Activated CD8-positive, alpha-beta T cell treated with anti-CD3 and anti-CD28 coated beads for 36 hours (primary cell): ENCODE measurements at regions of chrX and their contacts with region 1.

Region 1: DNA sequence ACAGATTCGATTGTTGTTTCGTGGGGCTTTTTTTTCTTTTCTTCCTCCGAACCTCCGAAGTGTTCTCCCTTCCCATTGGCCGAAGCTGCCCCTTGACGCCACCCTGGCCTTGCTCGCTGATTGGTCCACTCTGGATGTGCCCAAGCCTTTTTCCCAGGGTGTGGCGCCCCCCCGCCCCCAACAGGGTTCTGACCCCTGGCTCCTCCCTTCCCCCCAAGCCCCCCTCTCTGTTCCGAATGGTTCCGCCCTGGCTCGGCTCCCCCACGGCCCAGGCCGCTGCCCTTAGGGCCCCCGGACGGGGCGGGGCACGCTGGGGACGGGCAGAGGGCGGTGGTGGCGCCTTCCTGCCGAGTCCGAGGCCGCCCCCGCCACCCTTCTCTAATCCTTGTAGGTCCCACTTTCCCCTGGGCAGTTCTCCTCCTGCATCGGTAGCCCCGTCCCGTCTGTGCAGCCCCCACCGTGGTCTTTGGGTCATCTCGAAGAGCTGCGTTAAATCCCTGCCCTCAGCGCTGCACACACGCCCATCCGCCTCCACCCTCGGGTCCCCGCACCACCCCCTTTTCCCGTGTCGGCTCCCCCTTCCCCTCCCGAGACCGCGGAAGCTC is 25.5 kb downstream of the UTP14A start:
- DNase-seq: peak; percentile 68
- ATAC-seq: peak; percentile 70
- H3K4me3 Mint-ChIP-seq: peak overlapping the region; percentile 69
- H3K27ac Mint-ChIP-seq: peak overlapping the region; percentile 64
- H3K4me1 Mint-ChIP-seq: peaks cover 5% of the 10 kb centered on the region
- H3K27me3 Mint-ChIP-seq: peaks cover 3% of the 10 kb centered on the region
- CTCF ChIP-seq: no peak

Region 2: DNA sequence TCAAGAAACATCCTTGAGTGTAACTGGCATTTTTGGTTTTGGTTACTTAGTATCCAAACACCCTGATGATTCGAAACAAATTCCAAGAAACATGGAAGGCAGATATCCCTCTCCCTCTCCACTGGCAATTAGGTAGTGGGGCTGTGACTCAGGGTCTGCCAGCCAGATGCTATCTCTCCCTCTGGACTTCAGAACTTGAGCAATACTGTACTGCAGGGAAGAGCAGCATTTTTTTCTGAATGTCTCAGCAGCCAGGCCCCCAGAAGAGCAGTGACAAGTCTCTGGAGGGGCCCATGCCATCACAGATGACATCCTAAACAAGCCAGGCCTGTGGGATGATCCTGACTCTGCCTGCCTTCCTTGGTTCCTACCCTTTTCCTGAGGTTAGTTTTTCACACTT is 13.6 kb after region 1 on chrX:
- CTCF ChIA-PET with region 1: no interaction called
- POLR2A ChIA-PET with region 1: no interaction called
- intact Hi-C with region 1: no loop called
- DNase-seq: no peak
- ATAC-seq: no peak
- H3K4me3 Mint-ChIP-seq: no peak overlapping the region
- H3K27ac Mint-ChIP-seq: no peak overlapping the region
- H3K4me1 Mint-ChIP-seq: no peaks in the 10 kb centered on the region
- H3K27me3 Mint-ChIP-seq: no peaks in the 10 kb centered on the region
- CTCF ChIP-seq: no peak

Region 3: DNA sequence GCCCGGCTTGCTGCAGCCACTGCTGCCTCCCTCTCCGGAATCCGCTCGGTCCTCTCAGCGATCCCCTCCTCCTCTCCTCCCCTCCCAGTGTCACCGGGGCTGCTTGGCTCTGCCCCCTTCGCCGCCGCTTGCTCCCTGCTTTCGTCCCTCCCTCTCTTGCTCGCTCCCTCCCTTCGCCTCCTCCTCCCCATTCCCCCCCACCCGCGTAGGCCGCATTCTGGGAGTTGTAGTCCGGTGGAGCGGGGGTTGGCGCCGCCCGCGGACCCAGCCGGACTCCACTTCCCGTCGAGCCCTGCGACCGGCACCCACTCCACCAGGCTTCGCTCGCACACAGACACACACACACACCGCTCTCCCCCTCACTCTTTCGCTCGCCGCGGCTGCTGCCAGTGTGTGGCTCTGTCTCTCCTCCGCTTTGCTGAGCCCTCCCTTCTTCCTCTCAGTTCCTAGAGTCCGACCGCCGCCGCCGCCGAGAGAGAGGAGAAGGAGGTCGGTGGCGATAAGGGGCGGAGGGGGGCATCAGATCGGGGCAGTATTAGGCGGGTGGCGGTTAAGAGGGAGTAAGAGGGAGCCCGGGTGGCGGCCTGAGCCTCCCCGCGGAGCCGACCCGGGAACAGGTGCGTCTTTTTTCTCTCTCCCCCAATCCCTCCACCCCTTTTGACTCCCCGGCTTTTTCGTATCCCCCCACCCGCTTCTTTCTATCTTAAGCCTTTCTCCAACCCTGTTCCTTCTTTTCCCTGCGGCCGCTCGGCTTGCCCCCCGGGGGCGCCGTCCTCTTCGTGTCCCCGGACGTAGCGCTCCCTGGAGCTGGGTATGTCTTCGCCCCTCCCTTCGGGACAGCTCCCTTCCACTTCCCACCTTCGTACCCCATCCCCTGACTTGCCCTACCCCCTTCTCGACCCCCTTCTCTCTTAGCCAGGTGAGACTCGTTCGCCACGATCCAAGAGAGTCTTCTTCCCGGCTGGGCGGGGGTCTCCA is 51.0 kb after region 1 on chrX and contains the start of gene BCORL1:
- CTCF ChIA-PET with region 1: interaction called, 8 read pairs
- POLR2A ChIA-PET with region 1: no interaction called
- intact Hi-C with region 1: loop called (anchors 10 kb)
- DNase-seq: peak; percentile 92
- ATAC-seq: peak; percentile 94
- H3K4me3 Mint-ChIP-seq: no peak within 1 kb of the TSS
- H3K27ac Mint-ChIP-seq: no peak within 1 kb of the TSS
- H3K4me1 Mint-ChIP-seq: peaks cover 22% of the 10 kb centered on the region
- H3K27me3 Mint-ChIP-seq: no peaks in the 10 kb centered on the region
- CTCF ChIP-seq: no peak
- total RNA-seq, gene BCORL1: 7.1 to 9.9 TPM